ENCODE measurements at regions of chr22 and their contacts with region 1.

Region 1: GRCh38 chr22:40247976-40248375 is 70.3 kb downstream of the TNRC6B start:
- DNase-seq: no peak
- H3K4me3 ChIP-seq: no peak overlapping the region
- CTCF ChIP-seq: no peak

Region 2: DNA sequence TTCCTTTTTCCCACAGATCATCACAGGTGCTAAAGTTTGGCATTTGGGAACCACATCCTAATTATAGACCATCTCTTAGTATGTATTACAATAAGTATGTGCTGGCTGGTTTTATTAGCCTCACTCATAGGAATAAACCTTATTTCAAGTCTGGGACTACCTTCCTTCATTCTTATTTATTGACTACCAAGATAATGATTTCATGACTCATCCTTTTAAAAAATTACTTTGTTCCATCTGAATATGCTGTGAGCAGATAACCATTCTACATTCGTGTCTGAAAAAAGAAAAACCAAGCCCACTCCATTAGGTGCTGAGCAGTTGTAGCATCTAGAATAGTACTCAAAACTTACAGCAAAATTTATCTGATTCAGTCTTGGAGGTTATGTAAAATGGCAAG is 58.0 kb before region 1 on chr22:
- in situ Hi-C with region 1: loop called (anchors 5 kb)
- DNase-seq: no peak
- H3K4me3 ChIP-seq: no peak overlapping the region
- CTCF ChIP-seq: no peak

Region 3: DNA sequence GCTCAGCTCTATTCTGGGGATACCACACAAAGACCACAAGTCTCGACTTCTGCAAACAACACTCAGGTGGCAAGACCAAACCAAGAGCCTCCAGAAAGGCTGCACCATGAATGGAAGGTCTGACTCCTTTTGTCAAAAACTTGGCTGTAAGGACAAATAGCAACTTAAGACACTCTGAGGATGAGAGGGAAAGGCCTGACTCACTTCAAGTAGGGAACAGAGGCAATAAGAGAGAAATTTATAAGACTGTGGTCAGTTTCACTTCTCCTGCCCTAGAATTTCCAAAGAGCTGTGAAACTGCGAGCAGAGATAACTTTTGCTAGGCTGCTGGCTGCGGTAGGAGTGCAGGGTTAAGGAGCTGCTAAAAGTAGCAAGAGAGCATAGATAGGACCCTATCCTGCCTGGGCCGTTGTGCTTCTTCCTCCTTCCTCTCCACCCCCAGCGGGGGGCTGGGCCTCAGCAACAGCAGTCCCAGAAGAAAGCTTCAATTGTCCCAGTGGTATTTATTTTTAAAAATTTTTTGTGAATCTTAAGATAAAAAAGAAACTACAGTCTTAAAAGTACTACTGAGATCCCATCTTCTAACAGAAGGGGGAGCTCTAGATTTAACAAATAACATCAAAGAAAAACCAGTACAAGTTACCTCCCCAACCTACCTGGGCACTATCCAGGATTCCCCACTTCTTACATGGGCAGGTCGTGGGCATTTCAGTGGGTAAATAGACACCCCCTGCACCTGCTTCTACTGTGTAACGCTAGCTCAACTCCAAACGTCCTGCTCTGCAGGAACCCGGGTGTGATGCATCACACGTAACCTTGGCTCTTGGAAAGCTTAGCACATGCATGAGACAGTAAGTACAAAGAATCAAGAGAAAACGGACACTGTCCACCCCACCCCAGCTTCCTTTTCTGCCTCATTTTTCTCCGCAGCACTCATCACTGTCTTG is 188.8 kb after region 1 on chr22:
- in situ Hi-C with region 1: no loop called
- DNase-seq: peak; percentile 58
- H3K4me3 ChIP-seq: no peak overlapping the region
- CTCF ChIP-seq: peak; percentile 48

Measured in astrocyte of the cerebellum (primary cell).